ENCODE measurements at regions of chr14 and their contacts with region 1.

Region 1: GRCh38 chr14:93231129-93231979 is 24.3 kb downstream of the UBR7 start:
- DNase-seq: peak; percentile 88
- H3K4me3 ChIP-seq: peak overlapping the region; percentile 76
- H3K27ac ChIP-seq: peak overlapping the region; percentile 52
- H3K4me1 ChIP-seq: peaks cover 10% of the 10 kb centered on the region
- H3K27me3 ChIP-seq: no peaks in the 10 kb centered on the region

Region 2: GRCh38 chr14:92960711-92961549 is 270.4 kb before region 1 on chr14:
- in situ Hi-C with region 1: no loop called
- DNase-seq: peak; percentile 74
- H3K4me3 ChIP-seq: no peak overlapping the region
- H3K27ac ChIP-seq: no peak overlapping the region
- H3K4me1 ChIP-seq: peaks cover 8% of the 10 kb centered on the region
- H3K27me3 ChIP-seq: no peaks in the 10 kb centered on the region

Region 3: DNA sequence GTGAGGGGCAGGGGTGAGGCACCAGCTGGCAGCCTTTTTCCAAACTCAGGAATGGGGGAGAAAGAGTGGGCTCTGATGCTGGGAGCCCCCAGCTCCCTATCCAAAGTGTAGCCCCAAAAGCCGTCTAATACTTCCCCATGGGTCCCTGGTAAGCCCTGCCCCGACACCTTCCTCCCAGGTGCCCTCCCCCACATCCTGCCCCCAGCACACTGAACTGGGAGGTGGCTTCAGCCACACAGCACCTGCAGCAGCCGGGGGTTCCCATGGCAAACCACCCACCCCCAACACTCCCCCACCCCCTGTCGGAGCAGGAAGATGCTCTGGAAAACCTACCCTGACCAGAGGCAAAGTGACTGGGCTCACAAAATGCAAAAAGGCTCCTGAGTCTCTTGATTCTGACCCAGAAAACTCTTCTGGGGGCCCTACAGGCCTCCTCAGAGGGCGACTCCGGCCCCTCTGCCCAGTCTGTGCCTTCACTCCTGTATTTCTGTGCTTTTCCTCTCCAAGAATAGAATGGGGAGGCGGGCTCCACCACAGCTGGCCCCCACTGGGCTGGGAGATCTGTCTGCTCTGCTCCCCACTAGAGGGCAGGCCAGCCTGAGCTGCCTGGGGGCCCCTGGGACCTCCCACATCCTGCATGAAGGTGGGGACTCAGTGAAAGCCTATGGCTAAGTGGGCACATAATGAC is 197.2 kb before region 1 on chr14:
- in situ Hi-C with region 1: no loop called
- DNase-seq: no peak
- H3K4me3 ChIP-seq: no peak overlapping the region
- H3K27ac ChIP-seq: no peak overlapping the region
- H3K4me1 ChIP-seq: peaks cover 35% of the 10 kb centered on the region
- H3K27me3 ChIP-seq: no peaks in the 10 kb centered on the region

Region 4: GRCh38 chr14:93173943-93174395 is 57.4 kb before region 1 on chr14:
- in situ Hi-C with region 1: no loop called
- DNase-seq: peak; percentile 52
- H3K4me3 ChIP-seq: no peak overlapping the region
- H3K27ac ChIP-seq: no peak overlapping the region
- H3K4me1 ChIP-seq: no peaks in the 10 kb centered on the region
- H3K27me3 ChIP-seq: no peaks in the 10 kb centered on the region

Region 5: GRCh38 chr14:93481758-93482157 is 250.4 kb after region 1 on chr14:
- in situ Hi-C with region 1: no loop called
- DNase-seq: no peak
- H3K4me3 ChIP-seq: no peak overlapping the region
- H3K27ac ChIP-seq: no peak overlapping the region
- H3K4me1 ChIP-seq: no peaks in the 10 kb centered on the region
- H3K27me3 ChIP-seq: no peaks in the 10 kb centered on the region

Region 6: GRCh38 chr14:93543766-93544165 is 312.4 kb after region 1 on chr14:
- in situ Hi-C with region 1: loop called (anchors 25 kb)
- DNase-seq: peak; percentile 61
- H3K4me3 ChIP-seq: no peak overlapping the region
- H3K27ac ChIP-seq: no peak overlapping the region
- H3K4me1 ChIP-seq: no peaks in the 10 kb centered on the region
- H3K27me3 ChIP-seq: peaks cover 11% of the 10 kb centered on the region; the same call in 1 of the 2 replicates